ENCODE measurements at regions of chr4 and their contacts with region 1.

Region 1: DNA sequence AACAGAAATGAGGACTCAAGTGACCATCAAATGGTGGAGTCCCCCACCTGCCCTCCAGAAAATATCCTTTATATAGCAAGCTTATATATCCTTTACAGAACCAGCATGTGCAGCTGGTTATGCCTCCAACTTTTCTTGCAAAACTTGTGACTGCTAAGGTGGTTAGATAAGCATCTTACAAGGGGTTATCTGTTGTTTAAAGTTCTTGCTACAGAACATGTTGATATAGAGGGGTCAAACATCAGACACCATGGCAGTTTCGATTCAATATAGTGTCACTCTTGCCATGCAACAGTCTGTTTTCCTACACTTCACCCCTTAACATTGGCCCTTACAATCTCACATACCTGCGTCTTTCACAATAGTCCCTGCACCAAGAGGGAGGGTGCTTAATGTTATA is 59.7 kb downstream of the RCHY1 start:
- DNase-seq: no peak
- H3K4me3 ChIP-seq: no peak overlapping the region
- H3K27ac ChIP-seq: no peak overlapping the region
- H3K4me1 ChIP-seq: no peaks in the 10 kb centered on the region
- H3K27me3 ChIP-seq: no peaks in the 10 kb centered on the region
- CTCF ChIP-seq: no peak
- EP300 ChIP-seq: no peak
- POLR2A ChIP-seq: no peak

Region 2: DNA sequence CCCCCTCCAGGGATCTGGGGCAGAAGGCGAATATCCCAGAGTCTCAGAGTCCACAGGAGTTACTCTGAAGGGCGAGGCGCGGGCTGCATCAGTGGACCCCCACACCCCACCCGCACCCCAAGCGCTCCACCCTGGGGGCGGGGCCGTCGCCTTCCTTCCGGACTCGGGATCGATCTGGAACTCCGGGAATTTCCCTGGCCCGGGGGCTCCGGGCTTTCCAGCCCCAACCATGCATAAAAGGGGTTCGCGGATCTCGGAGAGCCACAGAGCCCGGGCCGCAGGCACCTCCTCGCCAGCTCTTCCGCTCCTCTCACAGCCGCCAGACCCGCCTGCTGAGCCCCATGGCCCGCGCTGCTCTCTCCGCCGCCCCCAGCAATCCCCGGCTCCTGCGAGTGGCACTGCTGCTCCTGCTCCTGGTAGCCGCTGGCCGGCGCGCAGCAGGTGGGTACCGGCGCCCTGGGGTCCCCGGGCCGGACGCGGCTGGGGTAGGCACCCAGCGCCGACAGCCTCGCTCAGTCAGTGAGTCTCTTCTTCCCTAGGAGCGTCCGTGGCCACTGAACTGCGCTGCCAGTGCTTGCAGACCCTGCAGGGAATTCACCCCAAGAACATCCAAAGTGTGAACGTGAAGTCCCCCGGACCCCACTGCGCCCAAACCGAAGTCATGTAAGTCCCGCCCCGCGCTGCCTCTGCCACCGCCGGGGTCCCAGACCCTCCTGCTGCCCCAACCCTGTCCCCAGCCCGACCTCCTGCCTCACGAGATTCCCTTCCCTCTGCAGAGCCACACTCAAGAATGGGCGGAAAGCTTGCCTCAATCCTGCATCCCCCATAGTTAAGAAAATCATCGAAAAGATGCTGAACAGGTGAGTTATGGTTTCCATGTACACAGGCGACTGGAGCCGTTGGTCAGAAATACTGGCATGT is 1585.1 kb before region 1 on chr4 and contains the start of gene CXCL1:
- in situ Hi-C with region 1: no loop called
- intact Hi-C with region 1: no loop called
- DNase-seq: peak; percentile 74
- H3K4me3 ChIP-seq: peak within 1 kb of the TSS; percentile 47 to 77 (median 56)
- H3K27ac ChIP-seq: peak within 1 kb of the TSS; percentile 70 to 82 (median 76)
- H3K4me1 ChIP-seq: peaks cover 0 to 19% (median 0%) of the 10 kb centered on the region in 4 donors
- H3K27me3 ChIP-seq: peaks cover 12% of the 10 kb centered on the region
- CTCF ChIP-seq: no peak
- EP300 ChIP-seq: no peak
- POLR2A ChIP-seq: peak; percentile 46
- total RNA-seq, gene CXCL1: 1.00 to 36.3 (median 15.4) TPM

Region 3: GRCh38 chr4:74919783-74920182 is 534.7 kb before region 1 on chr4:
- in situ Hi-C with region 1: loop called in 1 of 4 experiments (anchors 25 kb)
- intact Hi-C with region 1: no loop called
- DNase-seq: no peak
- H3K4me3 ChIP-seq: no peak overlapping the region
- H3K27ac ChIP-seq: no peak overlapping the region
- H3K4me1 ChIP-seq: no peaks in the 10 kb centered on the region
- H3K27me3 ChIP-seq: no peaks in the 10 kb centered on the region
- CTCF ChIP-seq: no peak
- EP300 ChIP-seq: no peak
- POLR2A ChIP-seq: no peak

Measured in transverse colon (tissue), 4 donors.